ENCODE measurements at regions of chr10 and their contacts with region 1.

Region 1: DNA sequence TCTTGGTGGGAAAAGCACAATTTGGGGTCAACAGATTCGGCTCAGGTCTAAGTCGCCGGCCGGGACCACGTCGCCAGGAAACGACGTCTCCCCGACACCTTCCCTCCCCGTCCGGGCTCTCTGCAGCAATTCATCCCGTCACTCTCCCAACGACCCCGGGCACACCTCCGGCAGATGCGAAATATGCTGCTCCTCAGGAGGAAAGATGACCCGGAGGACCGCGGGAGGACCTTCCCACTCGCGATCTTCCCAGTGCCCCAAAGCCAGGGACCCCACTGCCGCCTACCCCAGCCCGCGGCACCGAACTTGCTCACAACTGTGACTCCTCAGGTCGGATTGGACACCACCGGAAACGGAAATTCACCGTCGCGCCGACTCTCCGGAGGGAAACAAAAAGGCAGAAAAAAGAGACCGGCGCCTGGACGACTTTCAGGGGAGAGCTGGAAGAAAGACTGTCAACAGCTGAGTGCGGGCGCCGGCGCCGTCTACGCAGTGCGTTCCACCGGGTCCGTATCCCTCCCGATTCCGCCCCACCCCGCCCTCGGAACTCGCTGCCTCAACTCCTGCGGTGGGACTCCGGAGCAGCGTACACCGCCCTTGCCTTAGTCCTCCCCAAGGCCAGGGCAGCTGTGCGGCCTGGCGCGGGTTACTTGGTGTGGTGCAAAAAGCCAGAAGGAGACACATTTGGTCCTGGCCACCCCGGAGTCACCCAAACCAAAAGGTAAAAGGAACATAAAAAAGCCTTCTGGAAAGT is 13.8 kb upstream of the SEC24C start:
- DNase-seq: peak; percentile 82
- CTCF ChIP-seq: no peak

Region 2: DNA sequence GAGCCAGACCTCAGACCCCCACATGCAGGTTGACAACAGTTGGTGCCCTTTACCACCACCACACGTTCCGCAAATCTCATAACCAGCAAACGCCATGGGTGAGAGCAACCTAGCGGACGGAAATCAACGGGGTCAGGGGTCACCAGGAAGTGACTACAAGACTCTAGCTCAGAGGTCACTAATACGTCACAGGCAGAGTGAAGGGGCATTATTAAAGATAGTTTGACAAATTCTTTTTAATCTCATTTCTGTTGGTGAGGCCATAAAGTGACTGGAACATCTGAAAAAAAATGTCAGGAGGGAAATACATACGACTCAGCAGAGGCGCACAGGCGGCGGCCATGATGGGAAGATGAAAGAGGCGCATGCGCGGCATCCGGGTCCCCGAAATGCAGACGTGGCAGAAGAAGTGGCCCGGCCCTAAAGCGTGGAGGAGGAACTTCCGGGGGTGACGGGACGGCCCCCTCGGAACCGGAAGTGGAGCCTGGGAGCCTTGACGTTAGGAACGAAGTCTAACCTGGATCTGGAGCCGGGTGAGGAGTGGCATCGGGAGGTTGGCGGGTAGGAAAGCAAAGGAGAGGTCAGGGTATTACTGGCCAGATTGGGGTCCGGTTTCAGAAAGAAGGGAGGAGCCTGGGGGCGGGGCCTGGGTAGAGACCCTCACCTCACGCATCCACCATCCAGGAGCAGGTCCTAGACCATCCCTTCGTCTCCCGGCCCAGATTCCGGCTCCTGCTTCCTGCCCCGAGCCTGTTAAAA is 13.8 kb after region 1 on chr10 and contains the start of gene SEC24C:
- CTCF ChIA-PET with region 1: interaction called, 16 read pairs
- POLR2A ChIA-PET with region 1: interaction called, 3 read pairs
- DNase-seq: peak; percentile 94
- CTCF ChIP-seq: no peak

Measured in GM10248 (cell line).